Ascending aorta (tissue), 2 donors: ENCODE measurements at regions of chr11 and their contacts with region 1.

Region 1: GRCh38 chr11:129922674-129923073 is 27.3 kb upstream of the NFRKB start:
- DNase-seq: no peak
- H3K4me3 ChIP-seq: no peak overlapping the region
- H3K27ac ChIP-seq: no peak overlapping the region
- H3K4me1 ChIP-seq: no peaks in the 10 kb centered on the region
- H3K27me3 ChIP-seq: no peaks in the 10 kb centered on the region
- CTCF ChIP-seq: no peak

Region 2: GRCh38 chr11:130131961-130132850 is 209.5 kb after region 1 on chr11:
- intact Hi-C with region 1: loop called (anchors 1 kb)
- DNase-seq: peak in 1 of 2 donors; percentile 76
- H3K4me3 ChIP-seq: no peak overlapping the region
- H3K27ac ChIP-seq: no peak overlapping the region
- H3K4me1 ChIP-seq: no peaks in the 10 kb centered on the region
- H3K27me3 ChIP-seq: no peaks in the 10 kb centered on the region
- CTCF ChIP-seq: peak; percentile 72 to 81 (median 73)